ENCODE measurements at regions of chr18 and their contacts with region 1.

Region 1: DNA sequence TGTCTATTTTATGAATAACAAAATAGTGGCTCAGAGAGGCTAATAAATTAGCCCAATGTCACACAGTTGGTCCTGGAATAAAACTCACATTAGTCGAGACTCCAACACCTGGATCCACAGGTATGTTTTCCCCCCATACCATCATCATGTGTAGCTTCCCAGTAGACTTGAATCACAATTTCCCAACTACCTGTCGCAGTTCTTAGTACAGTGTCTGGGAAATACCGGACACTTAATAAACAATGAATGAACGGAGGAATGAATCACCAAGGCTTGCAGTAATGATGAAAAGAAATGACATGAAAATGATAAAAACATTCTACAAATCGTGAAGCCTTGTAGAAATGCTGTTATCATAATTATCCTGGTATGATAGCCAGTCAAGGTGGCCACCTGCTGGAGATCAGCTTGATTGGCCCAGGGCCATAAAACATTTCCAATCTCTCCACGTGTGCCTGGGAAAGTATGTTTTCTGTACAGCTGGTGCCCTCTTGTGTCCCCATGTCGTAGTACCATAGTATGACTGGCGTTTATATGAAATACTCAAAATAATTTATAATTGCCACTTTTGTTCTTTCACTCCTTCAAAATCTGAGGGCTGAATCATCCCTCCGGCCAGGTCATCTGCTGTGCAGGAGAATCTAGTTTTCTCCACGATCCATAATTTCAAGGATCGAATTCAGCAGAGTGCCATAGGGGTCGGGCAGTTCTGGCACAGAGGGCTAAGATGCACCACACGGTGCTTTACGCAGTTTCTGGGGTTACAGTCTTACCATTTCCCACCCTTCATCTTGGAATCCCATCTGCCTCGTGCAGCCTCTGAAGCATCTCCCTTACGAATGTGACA is 95.4 kb downstream of the LAMA1 start:
- DNase-seq: no peak
- ATAC-seq: no peak
- H3K4me3 ChIP-seq: no peak overlapping the region
- H3K27ac ChIP-seq: no peak overlapping the region
- H3K4me1 ChIP-seq: no peaks in the 10 kb centered on the region
- H3K27me3 ChIP-seq: no peaks in the 10 kb centered on the region
- CTCF ChIP-seq: peak in 1 of 5 experiments; percentile 14
- POLR2A ChIP-seq: no peak

Region 2: GRCh38 chr18:7084080-7085075 is 62.2 kb after region 1 on chr18:
- in situ Hi-C with region 1: loop called in 1 of 4 experiments (anchors 10 kb)
- intact Hi-C with region 1: no loop called
- DNase-seq: no peak
- ATAC-seq: no peak
- H3K4me3 ChIP-seq: no peak overlapping the region
- H3K27ac ChIP-seq: no peak overlapping the region
- H3K4me1 ChIP-seq: no peaks in the 10 kb centered on the region
- H3K27me3 ChIP-seq: no peaks in the 10 kb centered on the region
- CTCF ChIP-seq: no peak
- POLR2A ChIP-seq: no peak